GM10248 (cell line): ENCODE measurements at regions of chr1 and their contacts with region 1.

Region 1: DNA sequence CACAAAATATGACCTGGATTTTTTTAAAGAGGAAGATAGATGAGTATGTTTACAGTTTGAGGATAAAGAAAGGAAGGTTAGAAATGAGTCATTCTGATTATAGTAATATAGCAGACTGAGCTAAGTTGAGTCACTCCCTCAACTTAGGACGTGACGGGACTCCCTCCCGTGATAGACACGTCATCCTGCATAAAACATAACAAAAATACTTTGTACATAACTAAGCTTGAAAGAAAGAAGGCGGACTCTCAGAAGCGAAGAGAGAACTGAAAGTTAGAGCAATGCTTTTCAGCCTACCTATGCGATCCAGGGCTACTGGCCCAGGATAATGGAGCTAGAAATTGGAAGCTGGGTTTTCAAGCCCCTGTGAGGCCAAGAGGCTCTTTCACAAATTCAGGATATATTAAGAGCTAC is 53.0 kb upstream of the DESI2 start:
- DNase-seq: peak; percentile 72
- CTCF ChIP-seq: no peak

Region 2: DNA sequence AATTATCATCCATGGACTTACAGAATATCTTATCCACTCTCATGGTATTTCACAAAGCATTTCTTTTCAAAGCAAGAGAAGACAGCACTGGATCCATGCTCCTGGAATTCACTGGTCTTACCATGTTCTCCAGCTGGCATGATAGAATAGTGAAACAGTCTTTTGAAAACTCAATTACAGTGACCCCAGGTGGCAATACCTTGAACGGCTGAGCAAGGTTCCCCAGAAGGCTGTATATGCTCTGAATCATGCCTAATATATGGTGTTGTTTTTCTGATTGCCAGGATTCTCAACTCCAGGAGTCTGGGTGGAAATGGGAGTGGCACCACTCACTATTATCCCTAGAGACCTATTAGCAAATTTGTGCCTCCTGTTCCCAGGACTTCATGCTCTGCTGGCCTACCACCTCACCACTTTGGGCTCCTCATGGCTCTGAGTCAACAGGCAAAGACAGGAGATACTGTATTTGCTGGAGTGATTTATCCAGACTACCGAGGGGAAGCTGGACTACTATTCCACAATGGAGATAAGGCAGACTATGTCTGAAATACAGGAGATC is 51.3 kb before region 1 on chr1:
- CTCF ChIA-PET with region 1: no interaction called
- POLR2A ChIA-PET with region 1: no interaction called
- DNase-seq: no peak
- CTCF ChIP-seq: no peak

Region 3: DNA sequence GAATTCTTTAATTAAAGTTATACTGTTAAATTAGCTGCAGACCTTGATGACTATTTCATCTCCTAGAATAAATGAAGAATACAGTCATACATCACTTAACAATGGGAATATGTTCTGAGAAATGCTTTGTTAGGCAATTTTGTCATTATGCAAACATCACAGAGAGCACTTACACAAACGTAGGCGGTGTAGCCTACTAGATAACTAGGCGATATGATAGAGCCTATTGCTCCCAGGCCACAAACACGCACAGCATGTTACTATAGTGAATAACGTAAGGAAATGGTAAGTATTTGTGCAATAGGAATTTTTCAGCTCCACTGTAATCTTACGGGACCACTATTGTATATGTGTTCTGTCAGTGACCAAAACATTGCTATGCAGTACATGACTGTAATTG is 15.4 kb after region 1 on chr1:
- CTCF ChIA-PET with region 1: interaction called, 21 read pairs
- POLR2A ChIA-PET with region 1: no interaction called
- DNase-seq: no peak
- CTCF ChIP-seq: no peak